ENCODE measurements at regions of chrX and their contacts with region 1.

Region 1: DNA sequence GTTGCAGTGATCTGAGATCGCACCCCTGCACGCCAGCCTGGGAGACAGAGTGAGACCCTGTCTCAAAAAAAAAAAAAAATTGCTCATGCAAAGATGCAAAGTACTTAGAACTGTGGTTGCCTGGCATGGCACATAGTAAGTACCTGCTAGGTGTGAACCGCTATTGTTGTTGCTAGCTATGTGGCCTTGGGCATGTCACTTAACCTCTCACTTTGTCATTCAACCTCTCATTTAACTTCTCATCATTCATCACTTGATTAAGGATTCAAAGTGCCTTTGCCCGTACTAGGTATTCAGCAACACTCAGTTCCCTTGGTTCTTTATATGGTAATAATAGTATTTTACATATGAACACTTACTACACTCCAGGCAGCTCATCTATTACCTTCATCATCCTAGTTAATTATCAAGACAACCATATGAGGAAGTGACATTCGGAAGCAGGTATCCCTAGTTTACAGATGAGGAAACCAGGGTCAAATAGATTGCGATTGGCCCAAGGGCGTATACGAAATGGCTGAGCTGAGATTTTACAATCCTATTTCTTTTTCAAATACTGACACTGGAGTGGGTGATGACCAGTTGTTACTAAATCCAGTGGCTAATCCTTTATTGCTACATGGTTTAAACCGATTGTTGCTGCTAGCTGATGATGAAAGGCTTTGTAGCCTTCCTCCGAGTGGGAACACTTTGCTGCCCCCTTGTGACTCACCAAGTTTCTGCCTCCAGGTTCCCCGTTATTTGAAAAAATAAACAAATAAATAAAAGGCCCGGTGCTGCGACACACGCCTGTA is 28.8 kb upstream of the SOWAHD start:
- DNase-seq: peak; percentile 67 to 73 (median 70)
- H3K4me3 ChIP-seq: no peak overlapping the region
- H3K4me3 Mint-ChIP-seq: no peak overlapping the region
- H3K27ac ChIP-seq: no peak overlapping the region
- H3K27ac Mint-ChIP-seq: peak overlapping the region in 1 of 7 donors; percentile 7
- H3K4me1 ChIP-seq: peaks cover 5% of the 10 kb centered on the region
- H3K4me1 Mint-ChIP-seq: peaks cover 6 to 7% (median 7%) of the 10 kb centered on the region in 4 donors
- H3K27me3 ChIP-seq: no peaks in the 10 kb centered on the region
- H3K27me3 Mint-ChIP-seq: no peaks in the 10 kb centered on the region

Region 2: GRCh38 chrX:119488749-119489148 is 240.9 kb before region 1 on chrX:
- CTCF ChIA-PET with region 1: interaction called, 12 read pairs
- POLR2A ChIA-PET with region 1: no interaction called
- intact Hi-C with region 1: no loop called
- DNase-seq: peak in 4 of 5 donors; percentile 33 to 46 (median 38)
- H3K4me3 ChIP-seq: no peak overlapping the region
- H3K4me3 Mint-ChIP-seq: no peak overlapping the region
- H3K27ac ChIP-seq: no peak overlapping the region
- H3K27ac Mint-ChIP-seq: peak overlapping the region in 2 of 7 donors; percentile 22 to 43
- H3K4me1 ChIP-seq: no peaks in the 10 kb centered on the region
- H3K4me1 Mint-ChIP-seq: no peaks in the 10 kb centered on the region
- H3K27me3 ChIP-seq: no peaks in the 10 kb centered on the region
- H3K27me3 Mint-ChIP-seq: no peaks in the 10 kb centered on the region

Region 3: GRCh38 chrX:119606280-119607015 is 123.2 kb before region 1 on chrX and contains the start of gene NKRF:
- CTCF ChIA-PET with region 1: interaction called, 27 read pairs
- POLR2A ChIA-PET with region 1: interaction called, 3 read pairs
- intact Hi-C with region 1: loop called (anchors 1 kb)
- DNase-seq: peak; percentile 87 to 94 (median 89)
- H3K4me3 ChIP-seq: peak within 1 kb of the TSS; percentile 73 to 84
- H3K4me3 Mint-ChIP-seq: peak within 1 kb of the TSS; percentile 91 to 97 (median 95)
- H3K27ac ChIP-seq: peak within 1 kb of the TSS; percentile 85
- H3K27ac Mint-ChIP-seq: peak within 1 kb of the TSS; percentile 93 to 99 (median 99)
- H3K4me1 ChIP-seq: peaks cover 26% of the 10 kb centered on the region
- H3K4me1 Mint-ChIP-seq: peaks cover 10 to 46% (median 28%) of the 10 kb centered on the region in 4 donors
- H3K27me3 ChIP-seq: no peaks in the 10 kb centered on the region
- H3K27me3 Mint-ChIP-seq: no peaks in the 10 kb centered on the region
- total RNA-seq, gene NKRF: 13.0 to 14.2 TPM

Region 4: DNA sequence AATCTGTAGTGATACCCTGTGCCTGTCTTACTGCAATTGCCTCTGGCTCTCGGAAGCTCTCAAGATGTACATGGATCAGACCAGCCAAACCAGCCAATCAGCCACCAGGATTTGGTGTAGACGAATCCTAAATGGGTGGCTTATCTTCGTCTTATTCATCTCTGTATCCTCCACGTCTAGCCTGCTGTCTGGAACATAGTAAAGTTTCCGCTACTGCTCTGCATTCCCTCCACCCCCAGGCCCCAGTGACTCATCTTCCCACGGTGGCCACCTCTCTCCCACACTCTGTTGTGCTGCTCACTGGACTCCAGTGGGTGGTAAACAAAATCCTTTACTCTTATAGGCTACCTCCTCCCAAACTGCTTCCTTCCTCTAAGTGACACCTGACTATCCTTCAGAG is 74.5 kb before region 1 on chrX:
- CTCF ChIA-PET with region 1: interaction called, 17 read pairs
- POLR2A ChIA-PET with region 1: no interaction called
- intact Hi-C with region 1: no loop called
- DNase-seq: peak in 2 of 5 donors; percentile 41 to 79
- H3K4me3 ChIP-seq: no peak overlapping the region
- H3K4me3 Mint-ChIP-seq: peak overlapping the region in 5 of 8 donors; percentile 40 to 72 (median 59)
- H3K27ac ChIP-seq: peak overlapping the region; percentile 41
- H3K27ac Mint-ChIP-seq: peak overlapping the region; percentile 80 to 96 (median 91)
- H3K4me1 ChIP-seq: peaks cover 24% of the 10 kb centered on the region
- H3K4me1 Mint-ChIP-seq: peaks cover 26 to 50% (median 42%) of the 10 kb centered on the region in 4 donors
- H3K27me3 ChIP-seq: no peaks in the 10 kb centered on the region
- H3K27me3 Mint-ChIP-seq: no peaks in the 10 kb centered on the region

Region 5: GRCh38 chrX:119693040-119693995 is 36.3 kb before region 1 on chrX and contains the start of gene SEPTIN6:
- CTCF ChIA-PET with region 1: interaction called, 30 read pairs
- POLR2A ChIA-PET with region 1: interaction called, 9 read pairs
- intact Hi-C with region 1: loop called (anchors 2 kb)
- DNase-seq: peak; percentile 85 to 93 (median 93)
- H3K4me3 ChIP-seq: peak within 1 kb of the TSS; percentile 55 to 75
- H3K4me3 Mint-ChIP-seq: peak within 1 kb of the TSS; percentile 93 to 100 (median 98)
- H3K27ac ChIP-seq: peak within 1 kb of the TSS; percentile 89
- H3K27ac Mint-ChIP-seq: peak within 1 kb of the TSS; percentile 93 to 99 (median 98)
- H3K4me1 ChIP-seq: peaks cover 27% of the 10 kb centered on the region
- H3K4me1 Mint-ChIP-seq: peaks cover 9 to 38% (median 27%) of the 10 kb centered on the region in 4 donors
- H3K27me3 ChIP-seq: no peaks in the 10 kb centered on the region
- H3K27me3 Mint-ChIP-seq: no peaks in the 10 kb centered on the region
- total RNA-seq, gene SEPTIN6: 174 to 178 TPM

Region 6: DNA sequence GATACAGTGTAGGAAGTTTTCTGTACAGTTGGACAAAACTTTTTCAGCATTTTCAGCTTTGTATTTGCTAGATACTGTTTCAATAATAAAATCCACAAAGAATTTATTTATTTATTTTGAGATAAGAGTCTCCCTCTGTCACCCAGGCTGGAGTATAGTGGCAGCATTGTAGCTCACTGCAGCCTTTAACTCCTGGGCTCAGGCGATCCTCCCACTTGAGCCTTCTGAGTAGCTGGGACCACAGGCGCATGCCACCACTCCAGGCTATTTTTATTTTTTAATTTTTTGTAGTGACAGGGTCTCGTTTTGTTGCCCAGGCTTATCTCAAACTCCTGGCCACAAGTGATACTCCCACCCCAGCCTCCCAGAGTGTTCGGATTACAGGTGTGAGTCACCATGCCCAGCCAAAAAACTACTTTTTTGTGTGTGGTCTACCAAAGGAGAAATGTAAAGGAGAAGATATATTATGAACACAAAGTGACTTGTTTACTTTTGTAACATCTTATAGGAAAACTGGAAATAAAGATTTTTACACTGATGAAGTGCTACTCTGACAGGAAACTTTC is 15.8 kb after region 1 on chrX:
- CTCF ChIA-PET with region 1: interaction called, 10 read pairs
- POLR2A ChIA-PET with region 1: interaction called, 3 read pairs
- intact Hi-C with region 1: no loop called
- DNase-seq: no peak
- H3K4me3 ChIP-seq: no peak overlapping the region
- H3K4me3 Mint-ChIP-seq: no peak overlapping the region
- H3K27ac ChIP-seq: no peak overlapping the region
- H3K27ac Mint-ChIP-seq: peak overlapping the region in 1 of 7 donors; percentile 27
- H3K4me1 ChIP-seq: no peaks in the 10 kb centered on the region
- H3K4me1 Mint-ChIP-seq: no peaks in the 10 kb centered on the region
- H3K27me3 ChIP-seq: no peaks in the 10 kb centered on the region
- H3K27me3 Mint-ChIP-seq: no peaks in the 10 kb centered on the region

Measured in CD4-positive, alpha-beta memory T cell (primary cell).